Calu3 (cell line): ENCODE measurements at regions of chr3 and their contacts with region 1.

Region 1: DNA sequence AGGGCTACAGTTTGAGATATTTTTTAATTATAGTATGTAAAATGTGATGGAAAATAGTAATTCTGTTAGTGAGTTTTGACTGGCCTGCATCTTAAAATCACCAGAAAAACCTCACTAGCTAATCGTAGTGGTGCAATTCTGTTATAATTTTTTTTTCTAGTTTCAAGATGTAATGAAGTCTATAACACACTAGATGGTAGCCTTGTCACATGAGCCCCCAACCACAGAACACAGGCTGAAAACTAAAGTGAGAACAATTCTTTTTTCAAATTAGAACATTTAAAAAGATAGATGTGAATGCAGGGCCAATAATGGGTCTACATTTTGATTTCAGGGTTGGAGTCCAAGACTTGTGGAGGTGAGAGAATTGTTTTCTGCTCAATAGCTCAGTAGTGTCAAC is 83.3 kb upstream of the KCNH8 start:
- DNase-seq: no peak
- H3K4me3 Mint-ChIP-seq: no peak overlapping the region
- H3K27ac Mint-ChIP-seq: no peak overlapping the region
- H3K4me1 Mint-ChIP-seq: peaks cover 7% of the 10 kb centered on the region
- H3K27me3 Mint-ChIP-seq: no peaks in the 10 kb centered on the region
- CTCF ChIP-seq: no peak

Region 2: DNA sequence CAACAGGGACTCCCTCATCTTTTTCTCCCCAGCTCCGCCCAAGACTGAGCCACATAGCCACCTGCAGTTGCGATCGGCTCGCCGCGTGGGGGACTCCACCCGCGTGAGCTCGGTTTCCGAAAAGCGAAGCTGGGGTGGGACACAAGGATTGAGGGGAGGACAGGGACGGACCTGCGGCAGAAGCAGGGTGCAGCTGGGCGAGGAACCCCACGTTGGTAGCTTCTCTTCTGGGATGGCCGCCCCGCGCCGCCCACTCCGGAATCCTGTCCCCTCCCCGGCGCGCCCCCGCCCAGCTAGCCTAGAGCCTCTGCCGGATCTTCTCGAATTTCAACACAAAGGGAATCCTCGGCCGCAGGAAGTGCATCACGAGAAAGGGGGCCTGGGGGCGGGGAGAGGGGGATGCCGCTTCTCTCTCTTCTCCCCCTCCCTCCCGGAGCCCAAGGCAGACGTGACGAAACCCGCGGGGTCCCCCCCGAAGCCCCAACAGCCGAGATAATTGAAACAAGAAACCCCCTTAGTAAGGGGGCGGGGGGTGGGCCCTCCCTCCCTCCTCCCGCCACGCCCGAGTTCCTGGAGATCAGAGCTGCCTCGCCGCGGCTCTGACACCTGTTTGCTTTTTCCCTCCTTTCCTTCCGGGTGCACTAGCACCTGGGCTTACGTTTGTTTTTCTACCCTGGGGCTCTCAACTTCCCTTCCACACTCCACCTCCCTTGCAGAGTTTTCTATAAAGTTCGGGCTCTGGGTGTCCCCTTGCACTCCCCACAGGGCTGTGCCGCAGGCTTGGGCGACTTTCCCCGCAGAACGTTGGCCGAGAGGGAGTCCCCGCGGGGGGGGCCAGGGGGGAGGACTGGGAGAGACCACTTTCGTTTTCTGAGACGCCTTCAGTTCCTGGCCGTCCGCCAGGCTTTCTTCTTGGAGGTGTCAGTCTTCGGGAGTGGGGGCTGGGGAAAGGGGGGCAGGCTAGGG is 81.9 kb after region 1 on chr3:
- CTCF ChIA-PET with region 1: no interaction called
- intact Hi-C with region 1: loop called (anchors 5 kb)
- DNase-seq: peak; percentile 77
- H3K4me3 Mint-ChIP-seq: peak overlapping the region; percentile 89
- H3K27ac Mint-ChIP-seq: peak overlapping the region; percentile 78
- H3K4me1 Mint-ChIP-seq: peaks cover 12% of the 10 kb centered on the region
- H3K27me3 Mint-ChIP-seq: peaks cover 26% of the 10 kb centered on the region
- CTCF ChIP-seq: peak; percentile 40

Region 3: DNA sequence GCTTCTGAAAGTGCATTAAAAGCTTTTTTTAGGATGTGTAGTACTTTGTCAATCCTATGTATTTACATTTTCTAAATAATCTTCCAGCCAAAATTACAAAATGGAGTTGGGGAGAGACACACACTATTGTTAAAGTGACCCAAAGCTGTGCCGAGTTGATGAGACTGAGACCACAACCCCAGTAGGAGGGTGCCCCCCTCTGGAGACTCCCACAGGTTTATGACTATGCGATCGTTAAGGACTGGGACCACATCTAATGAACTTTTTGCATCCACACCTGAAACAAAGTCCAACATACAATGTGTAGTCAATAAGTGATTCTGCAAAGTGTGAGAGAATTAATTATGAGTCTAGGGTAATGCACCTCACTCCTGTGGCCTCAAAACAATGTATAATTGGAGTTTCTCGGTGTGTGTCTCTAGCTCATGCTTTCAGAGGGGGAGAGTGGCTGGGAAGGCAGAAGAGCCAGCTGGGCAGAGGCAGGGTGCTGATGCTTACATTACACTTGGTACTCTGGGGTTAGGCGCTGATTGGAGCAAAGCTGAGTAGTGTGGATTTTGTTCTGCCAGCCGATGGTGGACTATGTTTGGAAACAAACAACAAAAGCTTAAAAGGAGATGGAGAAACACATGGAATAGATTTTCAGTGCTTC is 186.1 kb after region 1 on chr3:
- CTCF ChIA-PET with region 1: no interaction called
- intact Hi-C with region 1: loop called (anchors 2 kb)
- DNase-seq: peak; percentile 5
- H3K4me3 Mint-ChIP-seq: no peak overlapping the region
- H3K27ac Mint-ChIP-seq: no peak overlapping the region
- H3K4me1 Mint-ChIP-seq: no peaks in the 10 kb centered on the region
- H3K27me3 Mint-ChIP-seq: no peaks in the 10 kb centered on the region
- CTCF ChIP-seq: no peak

Region 4: DNA sequence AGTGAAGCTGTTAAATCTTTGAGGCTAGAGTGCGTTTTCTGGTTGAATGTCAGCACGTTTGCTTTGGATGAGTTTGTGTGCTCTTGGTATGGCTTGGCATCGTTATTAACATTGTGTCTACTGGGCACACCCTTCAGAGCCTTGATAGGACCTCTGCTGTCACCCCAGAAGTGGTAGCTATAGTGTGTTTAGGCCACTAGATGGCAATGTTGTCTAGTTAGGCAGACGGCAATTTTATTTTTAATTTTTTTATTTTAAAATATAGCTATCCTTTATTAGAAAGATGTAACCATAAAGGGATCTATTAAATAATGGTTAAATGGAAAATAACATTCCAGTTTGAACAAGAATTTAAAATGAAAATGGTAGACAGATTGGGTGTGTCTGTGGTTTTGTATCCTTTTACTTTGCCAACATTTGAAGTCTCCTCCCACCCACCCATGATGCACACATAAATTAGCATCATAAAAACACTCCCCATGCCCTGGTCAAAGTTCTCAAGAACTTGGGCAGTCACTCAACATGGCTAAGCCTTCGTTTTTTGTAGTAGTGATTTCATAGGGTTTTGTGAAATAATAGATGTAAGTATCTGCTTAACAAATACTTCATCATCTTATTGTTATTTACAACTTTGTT is 284.0 kb after region 1 on chr3:
- CTCF ChIA-PET with region 1: interaction called, 3 read pairs
- intact Hi-C with region 1: loop called (anchors 5 kb)
- DNase-seq: peak; percentile 19
- H3K4me3 Mint-ChIP-seq: no peak overlapping the region
- H3K27ac Mint-ChIP-seq: no peak overlapping the region
- H3K4me1 Mint-ChIP-seq: no peaks in the 10 kb centered on the region
- H3K27me3 Mint-ChIP-seq: no peaks in the 10 kb centered on the region
- CTCF ChIP-seq: peak; percentile 56

Region 5: DNA sequence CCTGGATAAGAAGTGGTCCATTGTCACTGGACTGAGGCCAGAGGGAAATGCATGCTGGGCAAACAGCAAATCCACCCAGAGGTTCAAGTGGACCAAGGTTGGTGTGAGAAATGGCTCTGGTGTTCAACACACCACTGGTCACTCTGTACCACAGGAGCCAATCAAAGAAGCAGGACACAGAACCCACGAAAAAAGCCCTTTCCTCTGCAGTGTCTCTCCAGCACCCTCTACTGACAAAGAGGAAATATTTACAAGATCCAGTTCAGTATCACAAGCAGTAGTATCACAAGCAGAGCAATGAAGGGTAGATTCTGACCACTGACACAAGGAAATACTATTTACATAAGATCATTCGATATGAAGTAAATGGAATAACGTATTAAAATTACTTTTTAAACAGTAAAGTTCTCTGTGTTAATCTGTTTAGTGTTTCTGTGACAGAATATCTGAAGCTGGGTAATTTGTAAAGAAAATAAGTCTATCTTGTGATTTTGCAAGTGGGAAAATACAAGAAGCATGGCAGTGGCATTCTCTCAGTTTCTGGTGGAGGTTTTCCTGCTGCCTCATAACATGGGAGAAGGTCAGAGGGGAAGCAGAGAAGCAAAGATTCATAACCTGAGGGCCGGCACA is 478.3 kb after region 1 on chr3:
- CTCF ChIA-PET with region 1: no interaction called
- intact Hi-C with region 1: loop called (anchors 2 kb)
- DNase-seq: peak; percentile 5
- H3K4me3 Mint-ChIP-seq: no peak overlapping the region
- H3K27ac Mint-ChIP-seq: no peak overlapping the region
- H3K4me1 Mint-ChIP-seq: peaks cover 11% of the 10 kb centered on the region
- H3K27me3 Mint-ChIP-seq: peaks cover 8% of the 10 kb centered on the region
- CTCF ChIP-seq: peak; percentile 51